ENCODE measurements at regions of chr13 and their contacts with region 1.

Region 1: DNA sequence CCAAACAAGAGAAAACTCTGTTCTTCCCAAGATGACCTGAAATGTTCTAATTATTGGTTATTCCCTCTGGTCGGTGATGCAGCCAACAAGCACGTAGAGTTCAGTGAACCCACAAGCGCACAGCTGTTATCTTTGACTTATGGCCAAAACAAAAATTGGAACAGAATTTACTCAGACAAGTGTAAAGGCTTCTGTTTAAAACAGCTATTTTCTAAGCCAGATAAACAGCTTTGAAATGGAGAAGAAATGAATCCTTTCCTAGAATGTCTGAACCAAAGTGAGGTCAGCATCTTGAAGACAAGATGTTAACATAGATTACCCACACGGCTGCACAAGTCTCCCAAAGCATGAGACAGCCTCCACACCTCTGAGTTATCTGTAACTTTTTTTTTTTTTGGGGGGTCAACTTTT is 669.2 kb downstream of the DIAPH3 start:
- DNase-seq: peak; percentile 93
- H3K4me3 ChIP-seq: no peak overlapping the region
- H3K27ac ChIP-seq: peak overlapping the region; percentile 75
- H3K4me1 ChIP-seq: peaks cover 70% of the 10 kb centered on the region
- H3K27me3 ChIP-seq: no peaks in the 10 kb centered on the region
- CTCF ChIP-seq: no peak
- POLR2A ChIP-seq: no peak

Region 2: DNA sequence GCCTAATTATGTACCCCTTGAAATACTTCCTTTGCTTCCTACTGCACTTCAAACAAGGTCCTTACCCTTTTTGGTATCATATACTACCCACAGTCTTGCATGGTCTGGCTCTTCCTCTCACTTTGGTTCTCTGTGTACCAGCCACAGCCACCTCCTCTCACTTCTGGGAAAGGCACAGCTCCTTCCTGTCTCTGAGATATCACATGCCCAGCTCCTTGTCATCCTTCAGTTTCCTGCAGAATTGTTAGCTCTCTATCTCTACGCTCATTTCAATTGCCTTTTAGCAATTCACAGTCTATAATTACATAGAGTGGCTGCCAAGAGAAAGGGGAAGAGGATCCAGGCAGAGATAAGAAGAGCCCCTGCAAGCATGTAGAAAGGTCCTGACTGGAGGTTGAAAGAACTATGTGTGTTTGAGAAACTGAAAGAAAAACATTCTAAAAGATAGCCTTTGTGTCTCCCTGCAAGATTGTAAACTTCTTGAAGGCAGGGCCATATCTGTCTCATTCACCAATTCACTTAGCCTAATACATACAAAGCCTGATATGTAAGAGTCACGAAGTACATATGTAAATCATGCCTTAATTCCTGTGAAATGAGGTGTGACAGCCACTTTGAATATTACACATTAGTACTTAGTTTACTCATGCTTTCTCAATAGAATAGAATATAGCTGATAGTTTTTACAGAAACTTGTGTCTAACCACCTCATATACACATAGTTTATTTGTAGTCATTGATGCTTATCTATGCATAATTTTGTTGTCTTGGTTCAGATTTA is 263.9 kb before region 1 on chr13:
- CTCF ChIA-PET with region 1: no interaction called
- POLR2A ChIA-PET with region 1: no interaction called
- dilution Hi-C with region 1: no loop called
- intact Hi-C with region 1: no loop called
- DNase-seq: no peak
- H3K4me3 ChIP-seq: no peak overlapping the region
- H3K27ac ChIP-seq: no peak overlapping the region
- H3K4me1 ChIP-seq: no peaks in the 10 kb centered on the region
- H3K27me3 ChIP-seq: no peaks in the 10 kb centered on the region
- CTCF ChIP-seq: no peak
- POLR2A ChIP-seq: no peak

Region 3: DNA sequence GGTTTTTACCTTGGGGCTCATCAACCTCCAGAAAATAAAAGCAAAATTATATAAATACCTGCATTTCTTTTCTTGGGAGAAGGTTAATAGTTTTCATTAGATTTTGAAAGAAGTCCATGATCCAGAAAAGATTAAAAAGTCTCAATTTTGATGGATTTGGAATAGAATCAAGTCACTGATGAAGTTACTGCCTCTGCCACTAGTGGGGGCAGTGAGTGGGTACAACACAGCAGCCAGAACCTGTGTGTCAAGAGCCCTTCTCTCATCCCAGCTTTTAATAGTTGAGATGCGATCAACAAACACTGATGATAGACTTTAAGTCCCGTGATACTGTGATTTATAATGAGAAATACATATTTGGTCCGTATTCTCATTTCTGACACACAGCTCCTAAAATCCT is 17.6 kb before region 1 on chr13:
- CTCF ChIA-PET with region 1: interaction called, 8 read pairs
- POLR2A ChIA-PET with region 1: no interaction called
- dilution Hi-C with region 1: no loop called
- intact Hi-C with region 1: loop called (anchors 1 kb)
- DNase-seq: peak; percentile 41
- H3K4me3 ChIP-seq: no peak overlapping the region
- H3K27ac ChIP-seq: no peak overlapping the region
- H3K4me1 ChIP-seq: peaks cover 44% of the 10 kb centered on the region
- H3K27me3 ChIP-seq: no peaks in the 10 kb centered on the region
- CTCF ChIP-seq: peak; percentile 51 to 59
- POLR2A ChIP-seq: no peak

Region 4: DNA sequence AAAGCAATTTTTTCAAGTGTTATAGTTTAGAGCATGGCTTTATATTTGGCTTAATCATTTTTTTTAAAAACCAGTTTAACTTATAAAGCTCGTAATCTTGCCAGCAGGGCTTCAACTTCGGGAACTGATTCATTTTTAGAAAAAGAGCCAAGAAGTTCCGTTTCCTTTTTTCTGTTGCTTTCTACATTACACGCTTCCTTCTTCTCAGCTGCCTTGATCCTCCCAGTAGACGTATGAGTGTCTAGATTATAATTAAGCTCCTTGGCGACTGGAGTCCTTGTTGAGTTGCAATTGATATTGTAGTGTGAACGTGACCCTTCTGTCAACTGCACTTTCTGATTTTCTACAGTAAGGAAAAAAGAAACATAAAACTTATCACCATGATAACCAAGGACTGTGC is 171.9 kb after region 1 on chr13:
- CTCF ChIA-PET with region 1: interaction called, 5 read pairs
- POLR2A ChIA-PET with region 1: no interaction called
- dilution Hi-C with region 1: no loop called
- intact Hi-C with region 1: loop called (anchors 5 kb)
- DNase-seq: peak; percentile 93
- H3K4me3 ChIP-seq: peak overlapping the region in 1 of 3 experiments; percentile 3
- H3K27ac ChIP-seq: peak overlapping the region; percentile 69
- H3K4me1 ChIP-seq: peaks cover 16% of the 10 kb centered on the region
- H3K27me3 ChIP-seq: no peaks in the 10 kb centered on the region
- CTCF ChIP-seq: no peak
- POLR2A ChIP-seq: no peak